ENCODE measurements at regions of chr7 and their contacts with region 1.

Region 1: GRCh38 chr7:129825005-129825495 is 127.7 kb downstream of the UBE2H start:
- DNase-seq: peak in 4 of 5 donors; percentile 6 to 43 (median 22)
- H3K4me3 ChIP-seq: peak overlapping the region; percentile 66
- H3K4me3 Mint-ChIP-seq: peak overlapping the region; percentile 82 to 93 (median 87)
- H3K27ac ChIP-seq: no peak overlapping the region
- H3K27ac Mint-ChIP-seq: peak overlapping the region in 3 of 8 donors; percentile 63 to 88 (median 75)
- H3K4me1 ChIP-seq: peaks cover 15% of the 10 kb centered on the region
- H3K4me1 Mint-ChIP-seq: peaks cover 5 to 20% (median 13%) of the 10 kb centered on the region in 3 donors
- H3K27me3 ChIP-seq: no peaks in the 10 kb centered on the region
- H3K27me3 Mint-ChIP-seq: no peaks in the 10 kb centered on the region

Region 2: DNA sequence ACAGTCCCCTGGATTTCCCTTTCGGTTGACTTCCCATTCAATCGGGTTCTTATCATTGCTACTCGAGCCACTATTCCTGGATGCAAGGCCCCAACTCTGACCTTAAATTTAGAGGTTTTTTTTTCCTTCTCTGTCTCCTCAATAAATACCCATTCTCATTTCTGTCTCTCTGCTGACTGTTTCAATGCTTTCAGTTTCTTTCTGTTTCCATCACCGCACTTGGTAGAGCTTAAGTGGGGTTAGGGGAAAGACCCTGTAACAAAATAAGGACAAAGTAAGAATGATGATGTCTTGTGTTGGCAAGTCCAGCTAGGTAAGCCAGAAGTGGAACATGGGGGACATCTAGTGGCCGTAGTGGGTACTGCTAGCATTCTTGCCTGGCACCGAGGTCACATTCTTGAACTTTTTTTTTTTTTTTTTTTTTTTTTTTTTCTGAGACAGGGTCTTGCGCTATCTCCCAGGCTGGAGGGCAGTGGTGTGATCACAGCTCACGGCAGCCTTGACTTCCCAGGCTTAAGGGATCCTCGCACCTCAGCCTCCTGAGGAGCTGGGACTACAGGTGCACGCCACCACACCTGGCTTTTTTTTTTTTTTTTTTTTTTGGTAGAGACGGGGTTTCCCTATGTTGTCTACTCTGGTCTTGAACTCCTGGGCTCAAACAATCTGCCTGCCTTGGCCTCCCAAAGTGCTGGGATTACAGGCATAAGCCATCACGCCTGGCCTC is 185.8 kb after region 1 on chr7:
- CTCF ChIA-PET with region 1: interaction called, 32 read pairs
- POLR2A ChIA-PET with region 1: no interaction called
- DNase-seq: peak; percentile 75 to 88 (median 80)
- H3K4me3 ChIP-seq: no peak overlapping the region
- H3K4me3 Mint-ChIP-seq: no peak overlapping the region
- H3K27ac ChIP-seq: peak overlapping the region; percentile 27
- H3K27ac Mint-ChIP-seq: peak overlapping the region in 2 of 8 donors; percentile 40 to 90
- H3K4me1 ChIP-seq: no peaks in the 10 kb centered on the region
- H3K4me1 Mint-ChIP-seq: peaks cover 2 to 4% (median 3%) of the 10 kb centered on the region in 3 donors
- H3K27me3 ChIP-seq: no peaks in the 10 kb centered on the region
- H3K27me3 Mint-ChIP-seq: no peaks in the 10 kb centered on the region

Measured in CD8-positive, alpha-beta memory T cell (primary cell).